ENCODE measurements at regions of chr1 and their contacts with region 1.

Region 1: DNA sequence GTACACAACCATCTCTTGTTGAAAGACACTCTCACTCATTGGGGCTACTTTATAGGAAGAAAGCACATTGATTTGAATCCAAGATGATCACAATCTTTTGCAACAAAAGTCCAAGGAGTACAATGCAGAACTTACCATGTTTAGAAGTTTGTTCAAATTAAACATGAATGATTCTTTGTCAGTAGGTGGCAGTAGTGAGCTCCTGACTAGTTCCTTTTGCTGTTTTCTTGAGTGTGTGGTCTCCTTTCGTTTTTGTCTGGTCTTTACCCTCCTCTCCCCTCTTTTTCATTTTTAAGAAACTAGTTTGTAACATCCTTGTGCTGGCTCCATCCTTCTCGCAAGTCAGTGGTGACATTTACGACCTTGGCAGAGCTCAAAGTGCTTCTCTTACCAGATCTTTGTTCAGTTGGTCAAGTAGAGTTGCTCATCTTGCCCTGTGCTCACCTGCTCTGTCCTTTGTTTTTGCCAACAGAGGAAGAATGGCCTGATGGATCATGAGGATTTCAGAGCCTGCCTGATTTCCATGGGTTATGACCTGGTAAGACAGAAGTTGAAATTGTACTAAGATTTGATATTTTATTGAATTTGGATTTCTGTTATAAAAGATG is 35.7 kb upstream of the MTR start:
- DNase-seq: peak; percentile 51
- H3K4me3 ChIP-seq: no peak overlapping the region
- H3K27ac ChIP-seq: no peak overlapping the region
- H3K4me1 ChIP-seq: no peaks in the 10 kb centered on the region
- H3K27me3 ChIP-seq: no peaks in the 10 kb centered on the region
- CTCF ChIP-seq: peak; percentile 49 to 62
- POLR2A ChIP-seq: no peak

Region 2: DNA sequence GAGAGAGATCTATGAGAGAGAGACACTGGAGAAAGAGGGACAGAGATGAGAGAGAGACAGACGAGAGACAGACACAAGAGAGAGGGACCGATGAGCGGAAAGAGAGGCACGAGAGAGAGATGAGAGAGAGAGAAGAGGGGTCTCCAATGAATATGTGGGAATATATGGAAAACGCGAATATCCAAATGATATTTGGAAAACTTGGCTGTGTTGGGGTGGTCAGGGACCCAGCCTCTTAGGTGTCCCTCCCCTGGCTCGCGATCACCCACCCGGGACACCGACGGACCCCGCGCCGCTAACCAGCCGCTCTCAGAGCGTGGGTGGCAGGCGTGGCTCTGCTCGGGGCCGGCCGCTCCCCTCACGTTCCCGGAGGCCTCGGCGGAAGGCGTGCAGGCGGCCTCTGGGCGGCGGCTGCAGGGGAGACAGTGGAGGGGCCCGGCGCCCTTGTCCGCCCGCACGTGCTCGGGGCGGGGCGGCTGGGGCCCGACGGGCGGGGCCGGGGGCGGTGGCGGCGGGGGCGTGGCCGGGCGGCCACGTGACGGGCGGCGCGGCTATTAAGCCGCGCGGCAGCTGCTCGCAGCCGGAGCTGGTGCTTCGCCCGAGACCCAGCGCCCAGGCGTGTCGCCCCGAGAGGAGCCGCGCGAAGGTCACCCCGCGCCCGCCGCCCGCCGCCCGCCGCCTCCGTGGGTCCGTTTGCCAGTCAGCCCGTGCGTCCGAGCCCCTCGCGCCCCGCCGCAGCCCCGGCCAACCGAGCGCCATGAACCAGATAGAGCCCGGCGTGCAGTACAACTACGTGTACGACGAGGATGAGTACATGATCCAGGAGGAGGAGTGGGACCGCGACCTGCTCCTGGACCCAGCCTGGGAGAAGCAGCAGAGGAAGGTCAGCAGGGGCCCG is 73.2 kb before region 1 on chr1 and contains the start of gene ACTN2:
- CTCF ChIA-PET with region 1: interaction called, 12 read pairs
- POLR2A ChIA-PET with region 1: no interaction called
- dilution Hi-C with region 1: no loop called
- intact Hi-C with region 1: no loop called
- DNase-seq: peak; percentile 31
- H3K4me3 ChIP-seq: peak within 1 kb of the TSS; percentile 19 to 62 (median 44)
- H3K27ac ChIP-seq: no peak within 1 kb of the TSS
- H3K4me1 ChIP-seq: peaks cover 7% of the 10 kb centered on the region
- H3K27me3 ChIP-seq: peaks cover 3 to 5% of the 10 kb centered on the region in 2 experiments
- CTCF ChIP-seq: no peak
- POLR2A ChIP-seq: no peak
- total RNA-seq, gene ACTN2: 0.28 and 0.55 TPM in 2 replicates

Region 3: GRCh38 chr1:236734141-236734765 is 25.1 kb before region 1 on chr1:
- CTCF ChIA-PET with region 1: interaction called, 25 read pairs
- POLR2A ChIA-PET with region 1: no interaction called
- dilution Hi-C with region 1: no loop called
- intact Hi-C with region 1: no loop called
- DNase-seq: peak; percentile 95
- H3K4me3 ChIP-seq: peak overlapping the region in 1 of 3 experiments; percentile 15
- H3K27ac ChIP-seq: peak overlapping the region; percentile 52
- H3K4me1 ChIP-seq: peaks cover 16% of the 10 kb centered on the region
- H3K27me3 ChIP-seq: no peaks in the 10 kb centered on the region
- CTCF ChIP-seq: no peak
- POLR2A ChIP-seq: peak; percentile 39

Region 4: GRCh38 chr1:236774926-236775325 is 15.6 kb after region 1 on chr1:
- CTCF ChIA-PET with region 1: interaction called, 17 read pairs
- POLR2A ChIA-PET with region 1: no interaction called
- dilution Hi-C with region 1: no loop called
- intact Hi-C with region 1: no loop called
- DNase-seq: peak; percentile 61
- H3K4me3 ChIP-seq: no peak overlapping the region
- H3K27ac ChIP-seq: no peak overlapping the region
- H3K4me1 ChIP-seq: no peaks in the 10 kb centered on the region
- H3K27me3 ChIP-seq: peaks cover 5 to 6% of the 10 kb centered on the region in 2 experiments
- CTCF ChIP-seq: peak; percentile 36 to 41
- POLR2A ChIP-seq: no peak

Region 5: DNA sequence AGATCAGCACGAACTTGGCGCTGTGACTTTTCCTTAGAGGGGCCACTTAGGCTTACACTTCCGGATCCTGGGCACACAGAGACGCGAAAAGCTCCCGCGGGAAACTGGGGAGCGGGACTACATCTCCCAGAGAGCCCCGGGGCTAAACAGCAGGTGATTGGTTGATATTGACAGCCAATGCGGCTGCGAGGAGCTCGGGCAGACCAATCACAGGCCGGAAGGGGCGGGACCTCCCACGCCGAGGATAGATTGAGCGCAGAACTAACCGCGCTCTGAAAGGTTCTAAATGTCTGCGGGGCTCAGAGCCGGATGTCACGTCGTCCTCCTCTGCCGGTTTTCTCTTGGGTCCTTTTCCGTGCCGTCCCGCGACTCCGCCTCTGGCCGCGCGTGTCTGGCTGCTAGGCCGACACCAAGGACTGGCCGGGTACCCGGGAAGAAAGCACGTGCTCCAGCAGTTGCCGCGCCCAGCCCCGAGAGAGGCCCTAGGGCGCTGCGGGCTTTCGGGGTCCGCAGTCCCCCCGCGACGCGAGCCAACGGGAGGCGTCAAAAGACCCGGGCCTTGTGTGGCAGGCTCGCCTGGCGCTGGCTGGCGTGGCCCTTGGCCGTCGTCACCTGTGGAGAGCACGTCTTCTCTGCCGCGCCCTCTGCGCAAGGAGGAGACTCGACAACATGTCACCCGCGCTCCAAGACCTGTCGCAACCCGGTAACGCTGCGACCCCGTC is 35.8 kb after region 1 on chr1 and contains the start of gene MTR:
- CTCF ChIA-PET with region 1: interaction called, 21 read pairs
- POLR2A ChIA-PET with region 1: no interaction called
- dilution Hi-C with region 1: no loop called
- intact Hi-C with region 1: no loop called
- DNase-seq: peak; percentile 98
- H3K4me3 ChIP-seq: peak within 1 kb of the TSS; percentile 50 to 92 (median 85)
- H3K27ac ChIP-seq: peak within 1 kb of the TSS; percentile 39
- H3K4me1 ChIP-seq: peaks cover 11% of the 10 kb centered on the region
- H3K27me3 ChIP-seq: no peaks in the 10 kb centered on the region
- CTCF ChIP-seq: no peak
- POLR2A ChIP-seq: peak; percentile 89
- total RNA-seq, gene MTR: 41.8 and 45.2 TPM in 2 replicates

Region 6: GRCh38 chr1:237386362-237387143 is 627.2 kb after region 1 on chr1:
- CTCF ChIA-PET with region 1: interaction called, 32 read pairs
- POLR2A ChIA-PET with region 1: no interaction called
- dilution Hi-C with region 1: no loop called
- intact Hi-C with region 1: loop called (anchors 1 kb)
- DNase-seq: peak; percentile 9
- H3K4me3 ChIP-seq: no peak overlapping the region
- H3K27ac ChIP-seq: no peak overlapping the region
- H3K4me1 ChIP-seq: no peaks in the 10 kb centered on the region
- H3K27me3 ChIP-seq: no peaks in the 10 kb centered on the region
- CTCF ChIP-seq: peak; percentile 24 to 25
- POLR2A ChIP-seq: no peak

Measured in endothelial cell of umbilical vein (primary cell).